ENCODE measurements at regions of chr10 and their contacts with region 1.

Region 1: GRCh38 chr10:24383681-24384106 is 174.8 kb downstream of the KIAA1217 start:
- DNase-seq: peak; percentile 76
- ATAC-seq: peak; percentile 75
- H3K4me3 Mint-ChIP-seq: peak overlapping the region; percentile 10
- H3K27ac Mint-ChIP-seq: peak overlapping the region; percentile 65
- H3K4me1 Mint-ChIP-seq: peaks cover 18% of the 10 kb centered on the region
- H3K27me3 Mint-ChIP-seq: peaks cover 25% of the 10 kb centered on the region

Region 2: DNA sequence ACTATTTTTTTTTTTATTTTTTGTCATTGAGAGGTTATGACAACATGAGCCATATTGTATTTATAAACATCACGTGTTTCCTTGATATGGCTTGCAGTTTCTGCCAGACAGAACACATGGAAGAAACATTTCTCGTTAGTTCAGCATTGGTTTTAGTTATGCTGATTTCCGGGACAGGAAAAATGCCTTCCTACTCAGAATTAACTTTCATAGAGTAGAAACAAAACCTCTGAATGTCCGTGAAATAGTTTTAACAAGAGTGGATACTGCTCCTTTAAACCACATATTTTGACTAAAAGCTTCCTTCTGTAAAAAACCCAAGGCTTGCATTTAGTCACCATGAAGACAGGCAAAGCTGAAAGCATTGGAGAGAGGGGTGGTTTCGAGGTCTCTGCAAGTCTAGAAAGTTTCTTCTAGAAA is 65.6 kb after region 1 on chr10:
- CTCF ChIA-PET with region 1: no interaction called
- POLR2A ChIA-PET with region 1: no interaction called
- intact Hi-C with region 1: loop called in 1 of 2 experiments (anchors 1 kb)
- DNase-seq: no peak
- ATAC-seq: peak; percentile 65
- H3K4me3 Mint-ChIP-seq: no peak overlapping the region
- H3K27ac Mint-ChIP-seq: no peak overlapping the region
- H3K4me1 Mint-ChIP-seq: peaks cover 12% of the 10 kb centered on the region
- H3K27me3 Mint-ChIP-seq: peaks cover 27% of the 10 kb centered on the region